Activated B cell treated with CpG ODN at 0.5 μM for 24 hours (primary cell): ENCODE measurements at regions of chr12 and their contacts with region 1.

Region 1: DNA sequence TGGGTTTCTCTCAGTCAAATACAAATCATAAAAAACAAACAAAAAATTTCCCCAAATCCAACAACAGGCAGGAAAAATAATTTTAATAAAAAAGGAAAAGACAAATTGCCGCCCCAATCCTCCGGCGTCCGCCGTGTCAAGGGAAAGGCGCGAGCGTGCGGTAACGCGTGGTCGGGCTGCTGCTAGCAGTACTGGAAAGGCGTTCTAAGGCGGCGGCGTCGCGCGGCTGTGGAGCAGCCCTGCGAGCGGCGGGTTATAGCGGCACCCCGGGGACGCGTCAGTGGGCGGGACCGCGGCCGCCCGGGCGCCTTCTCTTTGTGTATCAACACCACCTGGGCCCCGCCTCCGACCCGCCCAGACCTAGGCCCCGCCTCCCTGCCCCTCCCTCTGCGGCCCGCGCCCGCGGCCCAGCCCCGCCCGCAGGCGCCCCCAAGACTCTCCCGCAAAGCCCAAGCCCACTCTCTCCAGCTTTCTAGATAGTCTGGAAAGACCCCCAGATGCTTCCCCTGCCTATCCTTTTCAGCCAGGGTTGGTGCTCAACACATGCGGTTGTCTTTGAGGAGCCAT is at the start of gene SLC38A2:
- DNase-seq: peak; percentile 97
- ATAC-seq: peak; percentile 88
- H3K4me3 Mint-ChIP-seq: peak within 1 kb of the TSS; percentile 96
- H3K27ac Mint-ChIP-seq: peak within 1 kb of the TSS; percentile 99
- H3K4me1 Mint-ChIP-seq: peaks cover 46% of the 10 kb centered on the region
- H3K27me3 Mint-ChIP-seq: no peaks in the 10 kb centered on the region
- CTCF ChIP-seq: no peak
- total RNA-seq, gene SLC38A2: 231 and 247 TPM in 2 replicates

Region 2: GRCh38 chr12:45728630-45729232 is 643.9 kb before region 1 on chr12:
- CTCF ChIA-PET with region 1: no interaction called
- POLR2A ChIA-PET with region 1: no interaction called
- intact Hi-C with region 1: loop called (anchors 5 kb)
- DNase-seq: peak; percentile 97
- ATAC-seq: peak; percentile 68
- H3K4me3 Mint-ChIP-seq: peak overlapping the region; percentile 92
- H3K27ac Mint-ChIP-seq: peak overlapping the region; percentile 99
- H3K4me1 Mint-ChIP-seq: peaks cover 41% of the 10 kb centered on the region
- H3K27me3 Mint-ChIP-seq: no peaks in the 10 kb centered on the region
- CTCF ChIP-seq: peak; percentile 60

Region 3: GRCh38 chr12:46342562-46343033 is 30.0 kb before region 1 on chr12:
- CTCF ChIA-PET with region 1: no interaction called
- POLR2A ChIA-PET with region 1: no interaction called
- intact Hi-C with region 1: no loop called
- DNase-seq: no peak
- ATAC-seq: peak; percentile 56
- H3K4me3 Mint-ChIP-seq: no peak overlapping the region
- H3K27ac Mint-ChIP-seq: no peak overlapping the region
- H3K4me1 Mint-ChIP-seq: peaks cover 2% of the 10 kb centered on the region
- H3K27me3 Mint-ChIP-seq: peaks cover 5% of the 10 kb centered on the region
- CTCF ChIP-seq: no peak

Region 4: GRCh38 chr12:46382964-46383653 is 10.5 kb after region 1 on chr12:
- CTCF ChIA-PET with region 1: interaction called, 8 read pairs
- POLR2A ChIA-PET with region 1: interaction called, 166 read pairs
- intact Hi-C with region 1: loop called (anchors 1 kb)
- DNase-seq: peak; percentile 92
- ATAC-seq: peak; percentile 69
- H3K4me3 Mint-ChIP-seq: peak overlapping the region; percentile 91
- H3K27ac Mint-ChIP-seq: peak overlapping the region; percentile 94
- H3K4me1 Mint-ChIP-seq: peaks cover 46% of the 10 kb centered on the region
- H3K27me3 Mint-ChIP-seq: no peaks in the 10 kb centered on the region
- CTCF ChIP-seq: no peak

Region 5: GRCh38 chr12:46459861-46460545 is 87.4 kb after region 1 on chr12:
- CTCF ChIA-PET with region 1: no interaction called
- POLR2A ChIA-PET with region 1: interaction called, 23 read pairs
- intact Hi-C with region 1: no loop called
- DNase-seq: peak; percentile 18
- ATAC-seq: peak; percentile 64
- H3K4me3 Mint-ChIP-seq: peak overlapping the region; percentile 84
- H3K27ac Mint-ChIP-seq: peak overlapping the region; percentile 93
- H3K4me1 Mint-ChIP-seq: peaks cover 67% of the 10 kb centered on the region
- H3K27me3 Mint-ChIP-seq: no peaks in the 10 kb centered on the region
- CTCF ChIP-seq: no peak

Region 6: DNA sequence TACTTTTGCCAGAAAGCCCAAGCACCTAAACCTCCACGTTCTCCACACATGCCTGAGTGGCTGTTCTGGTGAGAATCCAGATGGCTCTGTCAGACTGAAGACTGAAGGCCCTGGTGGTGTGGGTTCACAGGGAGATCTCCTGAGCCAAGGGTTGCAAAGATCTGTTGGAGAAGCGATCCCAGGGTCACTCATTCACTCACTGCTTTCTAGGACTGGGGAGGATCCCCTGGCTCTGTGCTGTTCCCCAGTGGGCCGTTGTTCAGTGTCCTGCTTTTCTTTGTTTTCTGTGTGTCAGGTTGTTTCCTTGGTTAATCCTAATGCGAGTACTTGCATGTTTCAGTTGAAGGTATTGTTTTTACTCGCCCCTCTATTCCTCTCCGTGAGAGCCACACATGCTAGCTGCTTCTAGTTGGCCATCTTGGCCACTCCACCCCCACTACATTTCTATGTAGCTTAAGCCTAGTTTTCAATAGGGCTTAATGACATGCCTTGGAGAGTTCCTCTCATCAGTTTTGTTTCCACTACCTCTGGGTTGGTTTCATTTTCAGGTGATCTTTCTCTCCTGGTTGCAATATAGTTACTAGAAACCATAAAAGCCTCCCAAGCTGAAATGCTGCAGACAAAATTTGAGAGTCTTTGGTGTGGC is 144.4 kb after region 1 on chr12:
- CTCF ChIA-PET with region 1: no interaction called
- POLR2A ChIA-PET with region 1: no interaction called
- intact Hi-C with region 1: loop called (anchors 2 kb)
- DNase-seq: no peak
- ATAC-seq: peak; percentile 91
- H3K4me3 Mint-ChIP-seq: peak overlapping the region; percentile 50
- H3K27ac Mint-ChIP-seq: peak overlapping the region; percentile 72
- H3K4me1 Mint-ChIP-seq: peaks cover 15% of the 10 kb centered on the region
- H3K27me3 Mint-ChIP-seq: no peaks in the 10 kb centered on the region
- CTCF ChIP-seq: no peak

Region 7: GRCh38 chr12:47356129-47356700 is 983.6 kb after region 1 on chr12:
- CTCF ChIA-PET with region 1: no interaction called
- POLR2A ChIA-PET with region 1: no interaction called
- intact Hi-C with region 1: loop called (anchors 5 kb)
- DNase-seq: no peak
- ATAC-seq: peak; percentile 77
- H3K4me3 Mint-ChIP-seq: peak overlapping the region; percentile 51
- H3K27ac Mint-ChIP-seq: peak overlapping the region; percentile 97
- H3K4me1 Mint-ChIP-seq: peaks cover 85% of the 10 kb centered on the region
- H3K27me3 Mint-ChIP-seq: no peaks in the 10 kb centered on the region
- CTCF ChIP-seq: no peak